GM10248 (cell line): ENCODE measurements at regions of chr17 and their contacts with region 1.

Region 1: GRCh38 chr17:27544350-27545131 is 86.4 kb upstream of the LGALS9 start:
- DNase-seq: peak; percentile 85
- CTCF ChIP-seq: no peak

Region 2: GRCh38 chr17:27265333-27265732 is 279.2 kb before region 1 on chr17:
- CTCF ChIA-PET with region 1: no interaction called
- POLR2A ChIA-PET with region 1: no interaction called
- DNase-seq: no peak
- CTCF ChIP-seq: no peak

Region 3: GRCh38 chr17:27461192-27461859 is 83.2 kb before region 1 on chr17:
- CTCF ChIA-PET with region 1: interaction called, 10 read pairs
- POLR2A ChIA-PET with region 1: no interaction called
- DNase-seq: no peak
- CTCF ChIP-seq: no peak

Region 4: DNA sequence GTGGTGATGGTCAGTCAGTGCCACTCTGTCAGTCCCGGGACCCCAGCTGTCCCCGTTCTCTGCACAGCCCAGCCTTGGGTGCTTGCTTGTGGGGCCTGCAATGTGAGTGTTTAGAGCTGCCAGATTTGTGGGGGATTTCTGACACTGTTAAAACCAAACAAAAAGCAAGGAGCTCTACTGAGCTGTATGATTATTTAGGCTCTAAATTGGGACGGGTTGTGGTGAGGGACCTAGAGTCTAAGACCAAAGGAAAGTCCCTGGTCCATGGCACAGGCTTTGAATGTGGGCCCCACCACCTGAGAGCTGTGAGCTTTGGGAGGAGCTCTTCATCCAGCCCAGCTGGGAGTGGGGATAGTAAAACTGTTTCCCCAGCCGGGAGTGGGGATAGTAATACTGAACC is 25.0 kb before region 1 on chr17:
- CTCF ChIA-PET with region 1: interaction called, 11 read pairs
- POLR2A ChIA-PET with region 1: no interaction called
- DNase-seq: peak; percentile 50
- CTCF ChIP-seq: no peak

Region 5: GRCh38 chr17:27532269-27533263 is 12.0 kb before region 1 on chr17:
- CTCF ChIA-PET with region 1: interaction called, 24 read pairs
- POLR2A ChIA-PET with region 1: interaction called, 4 read pairs
- DNase-seq: no peak
- CTCF ChIP-seq: no peak

Region 6: DNA sequence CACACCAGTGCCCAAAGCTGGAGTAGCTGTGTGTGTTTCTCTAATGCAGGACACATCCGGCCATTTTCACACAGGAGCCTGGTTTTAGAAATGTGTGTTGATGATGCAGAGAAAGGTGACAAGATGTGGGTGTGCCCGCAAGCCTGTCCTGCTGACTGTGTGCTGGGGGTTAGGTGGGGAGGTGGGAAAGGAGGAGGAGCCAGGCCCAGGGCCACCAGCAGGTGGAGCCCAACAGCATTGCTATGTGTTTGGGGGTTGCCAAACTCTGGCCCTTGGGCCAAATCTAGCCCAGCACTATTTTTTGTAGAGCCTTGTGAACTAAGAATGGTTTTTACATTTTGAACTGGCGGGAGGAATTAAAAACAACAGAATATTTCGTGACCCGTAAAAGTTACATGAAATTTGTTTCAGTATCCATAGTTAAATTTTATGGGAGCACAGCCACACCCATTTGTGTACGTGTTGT is 24.7 kb after region 1 on chr17:
- CTCF ChIA-PET with region 1: interaction called, 28 read pairs
- POLR2A ChIA-PET with region 1: no interaction called
- DNase-seq: peak; percentile 74
- CTCF ChIP-seq: peak; percentile 72

Region 7: DNA sequence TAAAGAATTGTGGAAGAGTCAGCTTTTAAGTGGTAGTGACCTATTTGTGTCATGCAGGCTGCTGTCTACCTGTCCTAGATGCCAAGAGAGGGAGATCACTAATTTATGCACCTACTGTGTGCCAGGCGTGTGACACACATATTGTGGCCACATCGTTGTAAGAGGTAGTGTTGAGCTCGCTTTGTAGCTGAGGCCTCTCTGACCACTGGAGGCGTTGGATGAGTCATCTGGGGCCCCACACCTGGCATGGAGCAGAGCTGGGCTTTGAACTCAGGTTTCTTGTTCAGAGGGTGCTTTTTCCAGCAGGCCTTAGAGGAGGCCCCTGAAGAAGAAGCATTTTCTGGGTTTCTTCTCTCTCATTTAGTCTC is 34.2 kb after region 1 on chr17:
- CTCF ChIA-PET with region 1: interaction called, 16 read pairs
- POLR2A ChIA-PET with region 1: no interaction called
- DNase-seq: peak; percentile 82
- CTCF ChIP-seq: no peak